BJ (cell line): ENCODE measurements at regions of chr13 and their contacts with region 1.

Region 1: DNA sequence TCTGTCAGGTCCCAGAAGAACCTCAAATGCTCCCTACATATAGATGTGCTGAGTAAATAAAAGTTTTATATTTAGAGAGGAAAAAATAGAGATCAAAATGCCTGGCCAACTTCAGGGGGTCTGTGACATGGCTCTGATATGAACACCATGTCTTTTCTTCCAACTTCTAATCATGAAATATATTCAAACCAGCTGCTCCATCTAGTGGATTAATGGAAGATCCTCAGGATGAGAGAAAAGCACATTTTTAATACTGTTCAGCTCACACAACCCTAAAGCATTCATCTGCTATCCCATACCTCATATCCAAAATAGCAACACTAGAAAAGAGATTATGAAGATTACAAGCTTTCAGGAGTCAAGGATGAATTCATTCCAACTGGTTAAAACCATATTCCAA is 56.0 kb upstream of the DOCK9 start:
- DNase-seq: no peak
- H3K4me3 ChIP-seq: no peak overlapping the region
- H3K27me3 ChIP-seq: no peaks in the 10 kb centered on the region
- CTCF ChIP-seq: peak; percentile 52

Region 2: DNA sequence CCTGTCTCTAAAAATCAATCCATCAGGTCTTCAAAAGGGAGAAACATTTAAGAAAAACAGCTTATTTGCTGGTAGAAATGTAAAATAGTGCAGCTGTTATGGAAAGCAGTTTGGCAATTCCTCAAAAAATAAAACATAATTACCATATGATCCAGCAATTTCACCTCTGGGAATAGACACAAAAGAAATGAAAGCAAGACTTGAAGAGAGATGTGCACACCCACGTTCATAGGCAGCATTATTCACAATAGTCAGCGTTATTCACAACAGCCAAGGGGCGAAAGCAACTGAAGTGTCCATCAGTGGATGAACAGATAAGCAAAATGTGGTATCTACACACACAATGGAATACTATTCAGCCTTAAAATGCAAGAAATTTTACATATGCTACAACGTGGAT is 10.9 kb before region 1 on chr13:
- CTCF ChIA-PET with region 1: interaction called, 12 read pairs
- POLR2A ChIA-PET with region 1: no interaction called
- DNase-seq: no peak
- H3K4me3 ChIP-seq: no peak overlapping the region
- H3K27me3 ChIP-seq: no peaks in the 10 kb centered on the region
- CTCF ChIP-seq: no peak

Region 3: GRCh38 chr13:99045396-99045795 is 11.6 kb after region 1 on chr13:
- CTCF ChIA-PET with region 1: interaction called, 16 read pairs
- POLR2A ChIA-PET with region 1: no interaction called
- DNase-seq: no peak
- H3K4me3 ChIP-seq: no peak overlapping the region
- H3K27me3 ChIP-seq: no peaks in the 10 kb centered on the region
- CTCF ChIP-seq: no peak

Region 4: DNA sequence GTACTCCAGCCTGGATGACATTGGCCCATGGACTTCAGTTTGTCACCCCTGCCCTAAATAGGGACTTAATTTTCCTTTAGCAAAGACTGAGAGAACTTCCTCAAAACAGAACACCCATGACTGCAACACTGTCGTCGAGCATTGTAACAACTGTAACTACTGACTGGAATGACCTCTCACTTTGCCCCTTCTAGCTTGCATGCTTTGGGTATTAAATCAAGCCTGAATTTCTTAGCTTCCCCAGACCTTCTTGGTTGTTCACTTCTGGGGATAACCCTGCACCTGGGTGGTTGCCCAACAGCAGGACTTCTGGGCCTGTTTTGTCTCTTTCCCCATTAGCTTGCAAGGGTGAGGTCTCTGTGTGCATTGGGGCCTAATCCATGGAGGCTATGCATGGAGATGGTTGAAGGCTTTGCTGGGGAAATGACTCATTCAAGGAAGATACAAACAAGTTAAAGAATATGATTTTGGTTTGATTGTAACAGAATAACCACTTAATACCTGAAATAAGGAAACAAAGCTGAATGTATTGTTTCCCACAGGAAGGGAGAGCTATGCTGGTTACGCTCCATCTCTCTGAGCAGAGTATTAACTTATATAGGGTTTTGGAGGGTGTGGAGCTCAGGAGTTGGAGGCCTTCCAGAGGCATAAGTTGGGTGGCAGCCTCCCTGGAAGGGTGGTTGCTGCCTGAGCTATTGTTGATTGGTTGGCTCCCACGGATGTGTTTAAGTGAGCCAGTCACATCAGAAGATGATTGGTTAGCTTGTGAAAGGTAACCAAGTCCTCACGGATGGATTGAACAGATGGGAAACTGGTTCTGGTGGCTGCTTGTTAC is 132.2 kb after region 1 on chr13:
- CTCF ChIA-PET with region 1: no interaction called
- POLR2A ChIA-PET with region 1: no interaction called
- DNase-seq: no peak
- H3K4me3 ChIP-seq: no peak overlapping the region
- H3K27me3 ChIP-seq: peaks cover 4% of the 10 kb centered on the region; the same call in 1 of the 2 replicates
- CTCF ChIP-seq: no peak

Region 5: DNA sequence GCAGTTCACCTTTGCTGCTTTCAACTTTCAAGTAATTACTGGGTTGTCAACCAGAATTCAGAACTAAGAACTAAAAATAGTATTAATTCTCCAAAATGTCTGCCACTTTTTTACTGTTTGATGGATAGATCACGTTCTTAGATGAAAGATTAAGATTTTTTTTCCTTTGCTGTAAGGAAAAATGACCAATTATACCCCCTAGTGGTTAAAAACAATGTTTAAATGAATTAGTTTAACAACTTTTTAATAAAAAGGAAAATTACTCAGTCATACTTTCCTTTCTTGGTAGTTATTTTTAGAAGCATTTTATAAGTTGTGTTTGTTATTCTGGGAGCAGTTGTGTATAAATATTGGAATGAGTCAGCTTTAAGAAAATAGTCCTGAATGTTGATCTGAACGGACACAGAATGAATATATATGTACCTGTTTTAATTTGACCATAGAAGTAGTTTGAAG is 472.0 kb after region 1 on chr13:
- CTCF ChIA-PET with region 1: no interaction called
- POLR2A ChIA-PET with region 1: interaction called, 20 read pairs
- DNase-seq: no peak
- H3K4me3 ChIP-seq: no peak overlapping the region
- H3K27me3 ChIP-seq: no peaks in the 10 kb centered on the region
- CTCF ChIP-seq: peak; percentile 30; the same call in 1 of the 2 replicates